ENCODE measurements at regions of chr11 and their contacts with region 1.

Region 1: DNA sequence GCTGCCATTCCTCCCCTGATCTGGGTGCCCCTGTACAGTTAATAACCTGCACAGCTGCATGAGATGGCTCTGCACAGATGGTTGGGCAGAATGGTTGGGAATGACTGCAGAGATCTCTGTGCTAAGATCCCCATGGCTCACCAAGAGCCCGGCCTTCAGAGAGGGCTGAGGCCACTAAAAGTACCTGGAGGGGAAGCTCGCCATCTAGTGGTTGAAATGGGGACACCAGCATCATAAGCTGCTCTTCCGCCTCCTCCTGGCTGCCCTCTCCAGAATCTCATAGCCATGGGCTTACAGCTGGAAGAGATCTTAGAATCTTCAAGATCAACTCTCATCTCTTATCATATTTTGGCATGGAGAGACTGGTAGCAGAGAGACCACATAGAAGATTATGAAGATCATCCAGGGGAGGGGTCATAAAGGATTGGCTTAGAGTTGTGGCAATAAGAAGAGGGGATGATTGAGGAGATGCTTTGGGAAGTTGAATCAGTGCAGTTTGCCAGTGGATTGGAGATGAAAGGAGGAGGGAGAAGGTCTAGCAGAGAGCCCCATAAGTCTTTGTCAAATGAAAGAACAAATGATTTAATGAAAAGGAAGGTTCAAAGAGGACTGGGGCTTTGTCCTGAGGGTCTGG is 22.0 kb upstream of the TLCD5 start:
- DNase-seq: peak; percentile 46
- H3K4me3 Mint-ChIP-seq: no peak overlapping the region
- H3K27ac Mint-ChIP-seq: no peak overlapping the region
- H3K4me1 Mint-ChIP-seq: no peaks in the 10 kb centered on the region
- H3K27me3 Mint-ChIP-seq: peaks cover 25% of the 10 kb centered on the region

Region 2: GRCh38 chr11:120172054-120172911 is 130.8 kb before region 1 on chr11:
- intact Hi-C with region 1: loop called (anchors 1 kb)
- DNase-seq: peak; percentile 27
- H3K4me3 Mint-ChIP-seq: no peak overlapping the region
- H3K27ac Mint-ChIP-seq: no peak overlapping the region
- H3K4me1 Mint-ChIP-seq: peaks cover 4% of the 10 kb centered on the region
- H3K27me3 Mint-ChIP-seq: peaks cover 65% of the 10 kb centered on the region

Region 3: GRCh38 chr11:120235024-120235861 is 67.9 kb before region 1 on chr11:
- intact Hi-C with region 1: loop called (anchors 1 kb)
- DNase-seq: peak; percentile 47
- H3K4me3 Mint-ChIP-seq: no peak overlapping the region
- H3K27ac Mint-ChIP-seq: no peak overlapping the region
- H3K4me1 Mint-ChIP-seq: no peaks in the 10 kb centered on the region
- H3K27me3 Mint-ChIP-seq: peaks cover 43% of the 10 kb centered on the region

Measured in activated T-helper 2 cell treated with anti-CD3 and anti-CD28 coated beads, Interferon-gamma antibody, Interleukin-2, Interleukin-4, amounts not matched to agents 10 μg/mL and 5 μg/mL and 100 μg/mL, durations not matched to agents 14 hours and 24 hours and 36 hours (primary cell).